ENCODE measurements at regions of chr6 and their contacts with region 1.

Region 1: GRCh38 chr6:12289933-12290820 is at the start of gene EDN1:
- DNase-seq: peak in 8 of 9 experiments; percentile 7 to 63 (median 41)
- ATAC-seq: peak; percentile 77
- H3K4me3 ChIP-seq: peak within 1 kb of the TSS; percentile 37 to 49
- H3K4me3 Mint-ChIP-seq: peak within 1 kb of the TSS; percentile 89
- H3K27ac ChIP-seq: no peak within 1 kb of the TSS
- H3K27ac Mint-ChIP-seq: no peak within 1 kb of the TSS
- H3K4me1 ChIP-seq: peaks cover 6% of the 10 kb centered on the region
- H3K4me1 Mint-ChIP-seq: peaks cover 18% of the 10 kb centered on the region
- H3K27me3 ChIP-seq: peaks cover 8 to 9% of the 10 kb centered on the region in 2 experiments
- H3K27me3 Mint-ChIP-seq: peaks cover 43% of the 10 kb centered on the region
- CTCF ChIP-seq: no peak
- total RNA-seq, gene EDN1: 0.95 to 1.0 TPM

Region 2: GRCh38 chr6:11700118-11700718 is 590.0 kb before region 1 on chr6:
- CTCF ChIA-PET with region 1: no interaction called
- POLR2A ChIA-PET with region 1: no interaction called
- intact Hi-C with region 1: loop called in 1 of 2 experiments (anchors 5 kb)
- DNase-seq: peak in 2 of 9 experiments; percentile 49 to 64
- ATAC-seq: no peak
- H3K4me3 ChIP-seq: no peak overlapping the region
- H3K4me3 Mint-ChIP-seq: no peak overlapping the region
- H3K27ac ChIP-seq: no peak overlapping the region
- H3K27ac Mint-ChIP-seq: no peak overlapping the region
- H3K4me1 ChIP-seq: no peaks in the 10 kb centered on the region
- H3K4me1 Mint-ChIP-seq: peaks cover 12% of the 10 kb centered on the region
- H3K27me3 ChIP-seq: peaks cover 0 to 2% of the 10 kb centered on the region in 2 experiments
- H3K27me3 Mint-ChIP-seq: no peaks in the 10 kb centered on the region
- CTCF ChIP-seq: peak; percentile 49

Region 3: DNA sequence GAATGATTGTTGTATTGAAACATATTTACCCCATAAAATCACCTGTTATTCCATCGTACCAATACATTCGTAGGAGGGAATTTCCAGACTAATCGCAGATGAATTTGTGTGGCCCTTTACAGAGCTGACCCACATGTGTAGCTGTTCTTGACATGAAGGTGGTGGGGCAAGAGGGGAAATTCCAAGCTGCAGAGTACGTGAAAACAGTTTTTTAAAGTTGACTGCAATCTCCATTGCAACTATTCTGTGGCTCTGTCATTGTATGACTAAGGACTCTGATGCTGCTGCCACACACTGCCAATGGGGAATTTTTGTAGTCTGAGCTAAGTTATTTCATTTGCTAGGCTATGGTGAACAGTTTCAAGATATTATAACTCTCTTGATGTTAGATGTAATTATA is 465.2 kb before region 1 on chr6:
- CTCF ChIA-PET with region 1: no interaction called
- POLR2A ChIA-PET with region 1: no interaction called
- intact Hi-C with region 1: loop called (anchors 5 to 10 kb)
- DNase-seq: peak in 1 of 9 experiments; percentile 27
- ATAC-seq: no peak
- H3K4me3 ChIP-seq: no peak overlapping the region
- H3K4me3 Mint-ChIP-seq: no peak overlapping the region
- H3K27ac ChIP-seq: no peak overlapping the region
- H3K27ac Mint-ChIP-seq: no peak overlapping the region
- H3K4me1 ChIP-seq: no peaks in the 10 kb centered on the region
- H3K4me1 Mint-ChIP-seq: peaks cover 3% of the 10 kb centered on the region
- H3K27me3 ChIP-seq: no peaks in the 10 kb centered on the region
- H3K27me3 Mint-ChIP-seq: peaks cover 2% of the 10 kb centered on the region
- CTCF ChIP-seq: no peak

Region 4: DNA sequence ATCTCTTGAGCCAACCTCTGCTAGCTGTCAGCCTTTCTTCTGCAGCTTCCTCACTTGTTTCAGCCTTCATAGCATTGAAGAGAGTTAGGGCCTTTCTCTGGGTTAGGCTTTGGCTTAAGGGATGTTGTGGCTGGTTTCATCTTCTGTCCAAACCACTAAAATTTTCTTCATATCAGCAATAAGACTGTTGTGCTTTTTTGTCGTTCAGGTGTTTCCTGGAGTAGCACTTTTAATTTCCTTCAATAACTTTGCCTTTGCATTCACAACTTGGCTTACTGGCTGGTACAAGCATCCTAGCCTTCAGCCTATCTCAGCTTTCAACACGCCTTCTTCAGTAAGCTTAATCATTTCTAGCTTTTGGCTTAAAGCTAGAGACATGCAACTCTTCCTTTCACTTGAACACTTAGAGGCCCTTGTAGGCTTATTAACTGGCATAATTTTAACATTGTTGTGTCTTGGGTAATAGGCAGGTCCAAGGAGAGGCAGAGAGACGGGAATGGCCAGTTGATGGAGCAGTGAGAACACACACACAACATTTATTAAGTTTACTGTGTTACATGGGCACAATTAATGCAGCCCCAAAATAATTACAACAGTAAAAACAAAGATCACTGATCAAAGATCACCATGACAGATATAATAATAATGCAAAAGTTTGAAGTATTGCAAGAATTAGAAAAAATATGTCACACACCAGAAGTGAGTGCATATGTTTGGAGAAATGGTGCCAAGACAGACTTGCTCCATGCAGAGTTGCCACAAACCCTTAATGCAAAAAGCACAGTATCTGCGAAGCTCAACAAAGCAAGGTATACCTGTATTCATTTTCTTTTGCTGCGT is 179.4 kb before region 1 on chr6:
- CTCF ChIA-PET with region 1: no interaction called
- POLR2A ChIA-PET with region 1: no interaction called
- intact Hi-C with region 1: no loop called
- DNase-seq: peak in 1 of 9 experiments; percentile 34
- ATAC-seq: no peak
- H3K4me3 ChIP-seq: no peak overlapping the region
- H3K4me3 Mint-ChIP-seq: no peak overlapping the region
- H3K27ac ChIP-seq: no peak overlapping the region
- H3K27ac Mint-ChIP-seq: peak overlapping the region; percentile 45
- H3K4me1 ChIP-seq: peaks cover 51% of the 10 kb centered on the region
- H3K4me1 Mint-ChIP-seq: peaks cover 53% of the 10 kb centered on the region
- H3K27me3 ChIP-seq: no peaks in the 10 kb centered on the region
- H3K27me3 Mint-ChIP-seq: no peaks in the 10 kb centered on the region
- CTCF ChIP-seq: no peak

Region 5: GRCh38 chr6:12150812-12151432 is 139.3 kb before region 1 on chr6:
- CTCF ChIA-PET with region 1: interaction called, 3 read pairs
- POLR2A ChIA-PET with region 1: no interaction called
- intact Hi-C with region 1: loop called (anchors 1 to 2 kb)
- DNase-seq: peak in 8 of 9 experiments; percentile 11 to 63 (median 50)
- ATAC-seq: peak; percentile 73
- H3K4me3 ChIP-seq: no peak overlapping the region
- H3K4me3 Mint-ChIP-seq: no peak overlapping the region
- H3K27ac ChIP-seq: no peak overlapping the region
- H3K27ac Mint-ChIP-seq: no peak overlapping the region
- H3K4me1 ChIP-seq: no peaks in the 10 kb centered on the region
- H3K4me1 Mint-ChIP-seq: no peaks in the 10 kb centered on the region
- H3K27me3 ChIP-seq: no peaks in the 10 kb centered on the region
- H3K27me3 Mint-ChIP-seq: no peaks in the 10 kb centered on the region
- CTCF ChIP-seq: peak; percentile 60

Region 6: GRCh38 chr6:12241493-12242175 is 48.5 kb before region 1 on chr6:
- CTCF ChIA-PET with region 1: no interaction called
- POLR2A ChIA-PET with region 1: no interaction called
- intact Hi-C with region 1: no loop called
- DNase-seq: no peak
- ATAC-seq: no peak
- H3K4me3 ChIP-seq: no peak overlapping the region
- H3K4me3 Mint-ChIP-seq: no peak overlapping the region
- H3K27ac ChIP-seq: no peak overlapping the region
- H3K27ac Mint-ChIP-seq: no peak overlapping the region
- H3K4me1 ChIP-seq: no peaks in the 10 kb centered on the region
- H3K4me1 Mint-ChIP-seq: no peaks in the 10 kb centered on the region
- H3K27me3 ChIP-seq: no peaks in the 10 kb centered on the region
- H3K27me3 Mint-ChIP-seq: no peaks in the 10 kb centered on the region
- CTCF ChIP-seq: no peak

Region 7: DNA sequence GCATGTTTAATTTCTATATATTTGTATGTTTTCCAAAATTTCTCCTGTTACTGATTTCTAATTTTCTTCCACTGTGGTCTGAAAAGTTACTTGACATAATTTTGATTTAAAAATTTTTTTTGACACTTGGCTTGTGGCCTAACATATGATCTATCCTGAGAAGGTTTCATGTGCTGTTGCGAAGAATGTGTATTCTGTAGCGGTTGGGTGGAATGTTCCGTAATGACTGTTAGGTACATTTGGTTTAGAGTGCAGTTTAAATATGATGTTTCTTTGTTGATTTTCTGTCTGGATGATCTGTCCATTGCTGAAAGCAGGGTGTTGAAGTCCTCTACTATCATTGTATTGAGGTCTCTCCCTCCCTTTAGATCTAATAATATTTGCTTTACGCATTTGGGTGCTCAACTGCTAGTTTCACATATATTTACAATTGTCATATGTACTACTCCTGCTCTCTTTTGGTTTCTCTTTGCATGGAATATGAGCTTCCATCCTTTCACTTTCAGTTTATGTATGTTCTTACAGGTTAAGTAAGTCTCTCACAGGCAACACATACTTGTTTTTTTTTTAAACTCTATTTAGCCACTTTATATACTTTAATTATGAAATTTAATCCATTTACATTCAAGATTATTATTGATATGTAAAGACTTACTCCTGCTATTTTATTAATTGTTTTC is 19.5 kb before region 1 on chr6:
- CTCF ChIA-PET with region 1: no interaction called
- POLR2A ChIA-PET with region 1: no interaction called
- intact Hi-C with region 1: no loop called
- DNase-seq: no peak
- ATAC-seq: no peak
- H3K4me3 ChIP-seq: no peak overlapping the region
- H3K4me3 Mint-ChIP-seq: no peak overlapping the region
- H3K27ac ChIP-seq: no peak overlapping the region
- H3K27ac Mint-ChIP-seq: no peak overlapping the region
- H3K4me1 ChIP-seq: no peaks in the 10 kb centered on the region
- H3K4me1 Mint-ChIP-seq: no peaks in the 10 kb centered on the region
- H3K27me3 ChIP-seq: no peaks in the 10 kb centered on the region
- H3K27me3 Mint-ChIP-seq: peaks cover 2% of the 10 kb centered on the region
- CTCF ChIP-seq: no peak

Region 8: GRCh38 chr6:12301009-12301408 is 10.8 kb after region 1 on chr6:
- CTCF ChIA-PET with region 1: interaction called, 24 read pairs
- POLR2A ChIA-PET with region 1: no interaction called
- intact Hi-C with region 1: no loop called
- DNase-seq: no peak
- ATAC-seq: no peak
- H3K4me3 ChIP-seq: no peak overlapping the region
- H3K4me3 Mint-ChIP-seq: no peak overlapping the region
- H3K27ac ChIP-seq: no peak overlapping the region
- H3K27ac Mint-ChIP-seq: no peak overlapping the region
- H3K4me1 ChIP-seq: no peaks in the 10 kb centered on the region
- H3K4me1 Mint-ChIP-seq: no peaks in the 10 kb centered on the region
- H3K27me3 ChIP-seq: no peaks in the 10 kb centered on the region
- H3K27me3 Mint-ChIP-seq: peaks cover 7% of the 10 kb centered on the region
- CTCF ChIP-seq: no peak

Region 9: DNA sequence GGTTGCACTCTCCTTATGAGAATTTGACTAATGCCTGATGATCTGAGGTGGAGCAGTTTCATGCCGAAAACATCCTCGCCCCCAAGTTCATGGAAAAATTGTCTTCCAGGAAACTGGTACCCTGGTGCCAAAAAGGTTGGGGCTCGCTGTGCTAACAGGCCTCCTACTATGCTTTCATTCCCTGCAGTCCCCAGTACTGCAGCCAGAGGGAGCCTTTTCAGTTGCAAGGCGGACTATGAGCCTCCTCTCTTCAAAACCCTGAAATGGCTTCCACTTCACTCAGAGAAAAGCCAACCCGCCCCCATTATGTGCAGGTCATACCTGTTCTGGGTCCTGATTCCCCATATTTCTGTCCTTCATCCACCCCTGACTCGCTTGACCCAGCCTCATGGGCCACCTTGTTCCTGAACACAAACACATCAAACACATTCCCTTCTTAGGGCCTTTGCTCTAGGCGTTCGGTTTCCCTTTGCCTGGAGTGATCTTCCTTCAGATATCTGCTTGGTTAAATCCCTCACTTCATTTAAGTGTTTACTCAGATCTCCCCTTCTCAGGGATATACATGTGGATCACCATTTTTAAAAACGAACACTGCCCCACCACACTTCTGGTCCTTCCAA is 600.1 kb after region 1 on chr6:
- CTCF ChIA-PET with region 1: no interaction called
- POLR2A ChIA-PET with region 1: no interaction called
- intact Hi-C with region 1: no loop called
- DNase-seq: peak in 2 of 9 experiments; percentile 12 to 14
- ATAC-seq: no peak
- H3K4me3 ChIP-seq: no peak overlapping the region
- H3K4me3 Mint-ChIP-seq: no peak overlapping the region
- H3K27ac ChIP-seq: no peak overlapping the region
- H3K27ac Mint-ChIP-seq: no peak overlapping the region
- H3K4me1 ChIP-seq: no peaks in the 10 kb centered on the region
- H3K4me1 Mint-ChIP-seq: peaks cover 3% of the 10 kb centered on the region
- H3K27me3 ChIP-seq: no peaks in the 10 kb centered on the region
- H3K27me3 Mint-ChIP-seq: peaks cover 11% of the 10 kb centered on the region
- CTCF ChIP-seq: peak; percentile 14

Measured in CD8-positive, alpha-beta T cell (primary cell).